Heart right ventricle (tissue), 16 donors: ENCODE measurements at regions of chr10 and their contacts with region 1.

Region 1: GRCh38 chr10:131900350-131901146 is at the start of gene PPP2R2D:
- DNase-seq: peak; percentile 93 to 94
- ATAC-seq: peak; percentile 96 to 97 (median 97)
- H3K4me3 ChIP-seq: peak within 1 kb of the TSS; percentile 75 to 99 (median 90)
- H3K27ac ChIP-seq: peak within 1 kb of the TSS; percentile 92 to 98 (median 96)
- H3K4me1 ChIP-seq: peaks cover 10 to 49% (median 42%) of the 10 kb centered on the region in 9 donors
- H3K27me3 ChIP-seq: peaks cover 0 to 24% (median 16%) of the 10 kb centered on the region in 7 donors
- CTCF ChIP-seq: no peak
- total RNA-seq, gene PPP2R2D: 26.8 to 46.5 (median 35.1) TPM

Region 2: DNA sequence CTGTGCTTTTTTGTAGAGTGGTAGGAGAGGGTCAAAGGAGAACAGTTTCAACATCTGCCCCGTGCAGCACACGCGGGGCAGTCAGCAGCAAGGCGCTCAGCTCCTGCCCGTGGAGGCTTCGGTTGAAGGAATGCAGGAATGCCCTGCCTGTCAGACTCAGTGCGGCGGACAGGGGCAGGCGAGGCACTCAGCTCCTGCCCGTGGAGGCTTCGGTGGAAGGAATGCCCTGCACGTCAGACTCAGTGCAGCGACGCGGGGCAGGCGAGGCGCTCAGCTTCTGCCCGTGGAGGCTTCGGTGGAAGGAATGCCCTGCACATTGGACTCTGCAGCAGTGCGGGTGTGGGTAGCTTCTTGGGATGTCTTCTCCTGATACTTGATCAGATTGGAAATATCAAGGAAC is 37.3 kb after region 1 on chr10:
- intact Hi-C with region 1: loop called in 4 of 10 experiments (anchors 5 kb)
- DNase-seq: peak in 1 of 2 donors; percentile 35
- ATAC-seq: peak; percentile 72 to 90 (median 84)
- H3K4me3 ChIP-seq: no peak overlapping the region
- H3K27ac ChIP-seq: peak overlapping the region in 1 of 10 donors; percentile 11
- H3K4me1 ChIP-seq: peaks cover 0 to 41% (median 26%) of the 10 kb centered on the region in 9 donors
- H3K27me3 ChIP-seq: no peaks in the 10 kb centered on the region
- CTCF ChIP-seq: no peak

Region 3: DNA sequence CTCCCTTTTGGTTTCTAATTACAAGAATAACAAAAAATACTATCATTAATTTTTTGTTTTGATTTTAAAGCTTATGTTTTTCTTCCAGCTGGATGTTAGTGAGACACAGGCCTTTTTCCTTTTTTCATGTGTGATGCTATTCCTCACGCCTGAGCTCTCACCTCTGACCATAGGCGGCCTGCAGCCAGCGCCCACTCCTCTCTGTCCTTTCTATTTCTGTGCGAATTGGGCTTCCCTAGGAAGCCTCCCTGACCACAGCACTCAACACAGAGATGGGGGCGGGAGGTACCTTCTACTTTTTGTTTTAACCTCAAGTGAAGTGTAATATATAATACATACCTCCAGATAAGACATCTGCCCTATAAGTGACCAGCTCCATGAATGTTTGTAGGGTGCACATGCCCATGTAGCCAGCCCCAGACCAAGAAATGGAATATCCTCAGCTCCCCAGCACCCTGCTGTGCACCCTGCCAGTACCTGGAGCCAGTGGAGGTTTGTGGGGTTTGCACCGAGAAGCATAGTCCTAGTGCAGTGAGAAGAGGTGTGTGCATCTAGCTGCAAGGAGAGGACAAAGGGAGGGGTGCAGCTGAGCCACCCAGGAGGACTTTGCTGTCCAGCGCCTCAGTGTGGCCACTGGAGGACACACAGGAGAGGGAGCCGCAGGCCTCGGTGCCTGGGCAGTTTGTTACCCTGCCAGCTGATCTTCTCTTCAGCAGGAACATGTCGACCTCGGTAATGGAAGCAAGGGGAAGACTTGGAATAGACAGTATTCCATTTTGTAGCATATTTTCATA is 42.7 kb after region 1 on chr10:
- intact Hi-C with region 1: loop called in 4 of 10 experiments (anchors 5 kb)
- DNase-seq: no peak
- ATAC-seq: peak in 6 of 8 donors; percentile 71 to 86 (median 74)
- H3K4me3 ChIP-seq: no peak overlapping the region
- H3K27ac ChIP-seq: no peak overlapping the region
- H3K4me1 ChIP-seq: peaks cover 0 to 6% (median under 1%) of the 10 kb centered on the region in 9 donors
- H3K27me3 ChIP-seq: no peaks in the 10 kb centered on the region
- CTCF ChIP-seq: peak; percentile 8 to 62 (median 44)

Region 4: GRCh38 chr10:131972474-131973071 is 72.0 kb after region 1 on chr10:
- intact Hi-C with region 1: loop called in 3 of 10 experiments (anchors 5 kb)
- DNase-seq: peak; percentile 76 to 83
- ATAC-seq: peak; percentile 77 to 91 (median 85)
- H3K4me3 ChIP-seq: peak overlapping the region in 6 of 10 donors; percentile 4 to 36 (median 10)
- H3K27ac ChIP-seq: peak overlapping the region in 9 of 10 donors; percentile 23 to 81 (median 73)
- H3K4me1 ChIP-seq: peaks cover 8 to 45% (median 34%) of the 10 kb centered on the region in 9 donors
- H3K27me3 ChIP-seq: no peaks in the 10 kb centered on the region
- CTCF ChIP-seq: no peak

Region 5: GRCh38 chr10:131981429-131982184 is 81.1 kb after region 1 on chr10 and contains the start of gene BNIP3:
- intact Hi-C with region 1: loop called in 3 of 10 experiments (anchors 5 kb)
- DNase-seq: peak; percentile 93 to 99
- ATAC-seq: peak; percentile 93 to 97 (median 96)
- H3K4me3 ChIP-seq: peak within 1 kb of the TSS; percentile 61 to 99 (median 90)
- H3K27ac ChIP-seq: peak within 1 kb of the TSS; percentile 60 to 91 (median 84)
- H3K4me1 ChIP-seq: peaks cover 4 to 40% (median 35%) of the 10 kb centered on the region in 9 donors
- H3K27me3 ChIP-seq: peaks cover 0 to 24% (median 0%) of the 10 kb centered on the region in 7 donors
- CTCF ChIP-seq: peak in 2 of 9 donors; percentile 7 to 14
- total RNA-seq, gene BNIP3: 111 to 211 (median 159) TPM

Region 6: GRCh38 chr10:132023092-132023811 is 122.7 kb after region 1 on chr10:
- intact Hi-C with region 1: loop called in 1 of 10 experiments (anchors 5 kb)
- DNase-seq: peak; percentile 82 to 89
- ATAC-seq: peak; percentile 78 to 95 (median 90)
- H3K4me3 ChIP-seq: peak overlapping the region; percentile 28 to 45 (median 34)
- H3K27ac ChIP-seq: no peak overlapping the region
- H3K4me1 ChIP-seq: peaks cover 0 to 12% (median 8%) of the 10 kb centered on the region in 9 donors
- H3K27me3 ChIP-seq: peaks cover 0 to 43% (median 34%) of the 10 kb centered on the region in 7 donors
- CTCF ChIP-seq: peak; percentile 87 to 97 (median 91)

Region 7: GRCh38 chr10:132142411-132143161 is 242.0 kb after region 1 on chr10:
- intact Hi-C with region 1: loop called in 1 of 10 experiments (anchors 10 kb)
- DNase-seq: peak in 1 of 2 donors; percentile 49
- ATAC-seq: peak; percentile 67 to 83 (median 70)
- H3K4me3 ChIP-seq: no peak overlapping the region
- H3K27ac ChIP-seq: no peak overlapping the region
- H3K4me1 ChIP-seq: peaks cover 0 to 12% (median 3%) of the 10 kb centered on the region in 9 donors
- H3K27me3 ChIP-seq: peaks cover 0 to 14% (median 6%) of the 10 kb centered on the region in 7 donors
- CTCF ChIP-seq: peak; percentile 68 to 92 (median 90)

Region 8: DNA sequence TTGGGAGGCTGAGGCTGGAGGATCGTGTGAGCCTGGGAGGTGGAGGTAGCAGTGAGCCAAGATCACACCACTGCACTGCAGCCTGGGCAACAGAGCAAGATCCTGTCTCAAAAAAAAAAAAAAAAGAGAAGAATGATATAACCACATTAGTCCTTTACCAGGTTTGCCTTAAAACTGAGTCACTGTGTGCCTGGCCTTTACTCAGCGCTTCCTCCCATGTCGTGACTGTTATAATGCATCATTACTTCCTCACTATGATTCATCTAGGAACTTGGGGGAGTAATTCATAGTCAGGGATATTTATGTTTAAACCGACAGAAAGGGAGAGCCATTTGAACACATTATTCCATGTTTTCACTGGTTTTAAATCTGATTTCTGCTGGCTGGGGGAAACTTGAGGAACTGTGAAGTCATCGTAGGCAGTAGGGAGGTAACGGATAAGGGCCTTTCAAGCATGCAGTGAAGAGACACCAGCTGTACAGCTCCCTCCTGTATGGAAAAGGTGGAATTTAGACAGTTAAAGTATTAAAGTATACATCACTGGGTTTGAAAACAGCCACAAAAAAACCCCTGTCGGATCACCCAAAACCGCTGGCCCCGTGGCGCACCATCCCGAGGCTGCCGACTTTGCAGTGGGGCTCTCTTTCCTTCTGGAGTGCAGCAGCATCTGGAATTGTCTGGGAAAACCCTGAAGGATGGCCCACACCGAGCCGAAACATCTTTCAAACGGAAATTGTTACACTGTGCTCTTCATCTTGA is 765.6 kb after region 1 on chr10:
- intact Hi-C with region 1: no loop called
- DNase-seq: no peak
- ATAC-seq: peak in 2 of 8 donors; percentile 41 to 59
- H3K4me3 ChIP-seq: no peak overlapping the region
- H3K27ac ChIP-seq: peak overlapping the region in 1 of 10 donors; percentile 56
- H3K4me1 ChIP-seq: peaks cover 0 to 5% (median 0%) of the 10 kb centered on the region in 9 donors
- H3K27me3 ChIP-seq: no peaks in the 10 kb centered on the region
- CTCF ChIP-seq: no peak